Ascending aorta (tissue), 2 donors: ENCODE measurements at regions of chr15 and their contacts with region 1.

Region 1: DNA sequence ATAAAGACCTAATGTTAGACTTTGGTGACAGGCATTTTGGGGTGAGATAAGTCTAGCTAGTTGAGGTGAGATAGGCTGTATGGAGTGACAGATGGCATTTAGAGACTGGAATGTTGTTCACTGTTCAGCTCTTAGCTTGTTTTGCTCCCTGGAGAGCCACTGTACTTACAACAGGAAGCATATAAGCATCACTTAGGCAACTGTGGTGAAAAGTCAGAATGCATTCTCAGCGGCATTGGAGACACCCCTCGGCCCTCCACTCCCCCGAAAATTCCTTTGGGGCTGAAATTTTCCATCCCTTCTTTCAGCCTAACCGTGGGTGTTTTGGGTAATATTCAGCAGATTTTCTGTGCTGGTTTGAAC is 73.4 kb downstream of the SLCO3A1 start:
- DNase-seq: no peak
- H3K4me3 ChIP-seq: peak overlapping the region in 1 of 2 donors; percentile 46
- H3K27ac ChIP-seq: peak overlapping the region; percentile 73 to 74
- H3K4me1 ChIP-seq: peaks cover 10 to 35% of the 10 kb centered on the region in 2 donors
- H3K27me3 ChIP-seq: no peaks in the 10 kb centered on the region
- CTCF ChIP-seq: no peak

Region 2: GRCh38 chr15:91158415-91159394 is 768.2 kb before region 1 on chr15:
- intact Hi-C with region 1: no loop called
- DNase-seq: no peak
- H3K4me3 ChIP-seq: no peak overlapping the region
- H3K27ac ChIP-seq: no peak overlapping the region
- H3K4me1 ChIP-seq: no peaks in the 10 kb centered on the region
- H3K27me3 ChIP-seq: no peaks in the 10 kb centered on the region
- CTCF ChIP-seq: no peak

Region 3: DNA sequence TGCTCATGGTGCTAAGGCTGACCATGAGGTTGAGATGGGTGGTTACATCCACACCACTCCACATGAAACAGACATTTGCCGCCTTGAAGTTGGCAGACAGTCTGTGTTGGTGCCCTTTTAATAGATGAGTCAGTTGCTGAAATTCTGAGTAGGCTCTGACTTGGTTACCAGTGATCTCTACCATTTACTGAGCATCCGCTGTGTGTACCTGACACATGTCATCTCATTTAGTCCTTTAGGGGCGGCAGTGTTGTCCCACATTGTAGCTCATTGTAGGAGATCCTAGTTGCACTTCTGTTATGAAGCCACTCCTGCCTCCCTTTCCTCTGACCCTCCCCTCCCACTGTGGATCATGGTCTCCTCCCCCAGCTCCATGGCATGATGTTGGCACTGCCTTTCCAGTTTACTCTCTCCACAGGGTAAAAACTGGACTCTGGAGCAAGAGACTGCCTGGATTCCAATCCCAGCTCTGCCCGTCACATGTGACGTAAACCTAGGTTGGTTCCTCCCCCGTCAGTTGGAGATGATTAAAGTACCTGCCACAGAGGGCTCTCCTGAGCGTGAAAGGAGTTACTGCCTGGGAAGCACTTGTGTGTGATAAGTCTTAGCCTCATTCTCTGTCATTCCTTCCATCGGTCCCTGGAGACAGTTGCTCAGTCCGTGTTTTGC is 51.8 kb before region 1 on chr15:
- intact Hi-C with region 1: no loop called
- DNase-seq: no peak
- H3K4me3 ChIP-seq: no peak overlapping the region
- H3K27ac ChIP-seq: no peak overlapping the region
- H3K4me1 ChIP-seq: no peaks in the 10 kb centered on the region
- H3K27me3 ChIP-seq: no peaks in the 10 kb centered on the region
- CTCF ChIP-seq: no peak

Region 4: GRCh38 chr15:91965501-91966184 is 38.8 kb after region 1 on chr15:
- intact Hi-C with region 1: loop called (anchors 5 kb)
- DNase-seq: peak; percentile 34 to 91
- H3K4me3 ChIP-seq: no peak overlapping the region
- H3K27ac ChIP-seq: peak overlapping the region; percentile 73 to 80
- H3K4me1 ChIP-seq: peaks cover 11 to 51% of the 10 kb centered on the region in 2 donors
- H3K27me3 ChIP-seq: no peaks in the 10 kb centered on the region
- CTCF ChIP-seq: no peak

Region 5: GRCh38 chr15:91992945-91993344 is 66.1 kb after region 1 on chr15:
- intact Hi-C with region 1: no loop called
- DNase-seq: no peak
- H3K4me3 ChIP-seq: no peak overlapping the region
- H3K27ac ChIP-seq: no peak overlapping the region
- H3K4me1 ChIP-seq: peaks cover 0 to 2% of the 10 kb centered on the region in 2 donors
- H3K27me3 ChIP-seq: no peaks in the 10 kb centered on the region
- CTCF ChIP-seq: no peak